WTC11 (cell line): ENCODE measurements at regions of chr2 and their contacts with region 1.

Region 1: GRCh38 chr2:79670198-79670597 is 157.3 kb downstream of the CTNNA2 start:
- DNase-seq: peak; percentile 88
- ATAC-seq: peak; percentile 100
- H3K4me3 Mint-ChIP-seq: no peak overlapping the region
- H3K27ac Mint-ChIP-seq: no peak overlapping the region
- H3K4me1 Mint-ChIP-seq: peaks cover 26% of the 10 kb centered on the region
- H3K27me3 Mint-ChIP-seq: no peaks in the 10 kb centered on the region
- CTCF ChIP-seq: no peak

Region 2: DNA sequence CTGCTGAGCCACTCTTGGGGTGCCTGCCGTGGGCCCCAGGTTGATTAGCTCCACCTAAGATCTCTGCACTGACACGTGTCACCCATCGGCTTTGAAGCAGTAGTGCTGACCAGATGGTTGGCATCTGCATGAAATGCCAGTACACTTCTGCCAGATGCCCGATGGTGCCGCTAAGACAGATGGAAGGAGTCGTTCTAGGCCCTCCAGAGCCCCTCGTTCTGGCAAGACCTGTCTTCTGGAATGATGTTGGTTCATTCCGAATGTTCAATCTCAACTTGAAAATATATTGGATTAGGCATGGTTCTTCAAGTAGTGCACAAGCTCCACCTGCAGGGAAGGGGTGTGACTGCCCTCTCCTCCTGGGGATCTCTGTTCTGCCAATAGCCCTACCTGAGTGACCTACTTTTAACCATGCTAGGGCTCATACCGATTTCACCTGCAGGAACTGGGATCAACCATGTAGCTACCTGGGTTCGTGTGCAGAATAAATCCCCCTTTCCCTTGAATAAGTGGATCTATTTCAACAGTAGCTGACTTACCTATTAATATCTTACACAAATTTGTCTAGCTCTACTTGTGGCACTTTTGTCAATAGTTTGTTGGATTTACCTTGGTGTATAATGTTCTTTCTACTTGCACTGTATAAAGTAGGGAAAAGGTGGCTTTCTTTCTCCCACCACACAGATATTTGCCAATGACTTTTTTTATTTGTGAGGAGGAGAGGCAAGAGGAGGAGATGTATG is 185.2 kb after region 1 on chr2:
- CTCF ChIA-PET with region 1: interaction called, 37 read pairs
- POLR2A ChIA-PET with region 1: no interaction called
- DNase-seq: peak; percentile 67
- ATAC-seq: peak; percentile 98
- H3K4me3 Mint-ChIP-seq: no peak overlapping the region
- H3K27ac Mint-ChIP-seq: peak overlapping the region; percentile 11; the same call in 1 of the 2 replicates
- H3K4me1 Mint-ChIP-seq: peaks cover 54% of the 10 kb centered on the region
- H3K27me3 Mint-ChIP-seq: no peaks in the 10 kb centered on the region
- CTCF ChIP-seq: peak; percentile 33

Region 3: DNA sequence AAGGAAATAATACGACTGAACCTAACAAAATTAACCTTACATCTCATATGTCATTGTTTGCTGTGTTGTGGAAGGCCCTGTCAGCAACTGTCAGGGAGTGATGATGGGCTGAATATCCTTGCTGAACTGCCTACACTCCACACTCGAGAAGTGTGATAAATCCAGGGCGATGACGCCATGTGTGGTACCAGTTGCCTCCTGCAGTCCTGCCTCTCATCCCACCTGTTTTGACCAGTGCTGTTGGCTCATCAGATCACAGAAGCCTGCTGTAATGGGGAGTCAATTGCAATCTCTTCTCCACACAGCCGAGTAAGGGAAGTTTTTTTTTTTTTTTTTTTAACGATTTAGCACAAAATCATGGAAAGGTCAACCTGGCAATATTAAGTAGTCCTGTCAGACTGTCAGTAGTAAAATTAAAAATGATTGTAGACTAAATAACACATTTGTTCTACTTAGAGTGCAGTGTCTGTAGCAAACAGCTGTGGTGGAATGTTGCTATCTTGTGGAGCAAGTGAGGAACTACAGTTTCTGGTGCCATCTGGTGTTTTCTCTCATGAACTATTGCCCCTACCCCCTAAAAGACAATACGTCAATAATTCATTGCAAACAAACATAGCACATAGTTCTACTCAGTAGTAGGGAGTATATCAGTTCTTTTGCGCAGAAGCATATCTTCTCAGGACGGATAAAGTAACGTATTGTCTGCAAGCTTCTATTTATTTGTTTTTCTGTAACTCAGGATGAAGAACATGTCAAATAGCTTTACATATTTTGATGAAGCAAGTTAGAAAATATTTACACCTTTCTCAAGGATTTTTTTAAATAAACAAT is 190.2 kb after region 1 on chr2:
- CTCF ChIA-PET with region 1: interaction called, 37 read pairs
- POLR2A ChIA-PET with region 1: no interaction called
- DNase-seq: no peak
- ATAC-seq: peak; percentile 88
- H3K4me3 Mint-ChIP-seq: no peak overlapping the region
- H3K27ac Mint-ChIP-seq: no peak overlapping the region
- H3K4me1 Mint-ChIP-seq: peaks cover 42% of the 10 kb centered on the region
- H3K27me3 Mint-ChIP-seq: no peaks in the 10 kb centered on the region
- CTCF ChIP-seq: peak; percentile 51

Region 4: GRCh38 chr2:79960519-79960918 is 290.3 kb after region 1 on chr2:
- CTCF ChIA-PET with region 1: no interaction called
- POLR2A ChIA-PET with region 1: no interaction called
- DNase-seq: no peak
- ATAC-seq: no peak
- H3K4me3 Mint-ChIP-seq: no peak overlapping the region
- H3K27ac Mint-ChIP-seq: no peak overlapping the region
- H3K4me1 Mint-ChIP-seq: peaks cover 13% of the 10 kb centered on the region
- H3K27me3 Mint-ChIP-seq: no peaks in the 10 kb centered on the region
- CTCF ChIP-seq: no peak